Posterior vena cava (tissue), 2 donors: ENCODE measurements at regions of chr10 and their contacts with region 1.

Region 1: GRCh38 chr10:120098232-120098930 is 205.9 kb downstream of the SEC23IP start:
- DNase-seq: no peak

Region 2: DNA sequence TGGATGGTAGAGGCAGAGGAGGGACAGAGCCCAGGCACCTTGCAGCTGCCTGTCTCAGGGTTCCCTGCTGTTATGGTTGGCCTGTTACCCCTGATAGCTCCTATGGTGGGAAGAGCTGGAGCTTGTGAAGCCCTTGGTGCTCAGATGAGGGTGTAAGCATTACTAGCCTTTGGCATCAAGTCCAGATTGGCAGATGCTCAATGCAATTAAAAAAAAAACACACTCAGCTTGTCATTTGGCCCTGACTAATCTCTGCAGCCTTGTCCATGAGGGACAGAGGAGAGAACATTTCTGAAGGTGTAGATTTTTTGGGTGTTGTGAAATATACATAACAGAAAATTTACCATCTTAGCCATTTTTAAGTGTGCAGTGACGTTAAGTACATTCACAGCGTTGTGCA is 444.9 kb after region 1 on chr10:
- intact Hi-C with region 1: loop called in 1 of 2 experiments (anchors 5 kb)
- DNase-seq: no peak